Cardiac septum (tissue), 1 donor: ENCODE measurements at regions of chr15 and their contacts with region 1.

Region 1: DNA sequence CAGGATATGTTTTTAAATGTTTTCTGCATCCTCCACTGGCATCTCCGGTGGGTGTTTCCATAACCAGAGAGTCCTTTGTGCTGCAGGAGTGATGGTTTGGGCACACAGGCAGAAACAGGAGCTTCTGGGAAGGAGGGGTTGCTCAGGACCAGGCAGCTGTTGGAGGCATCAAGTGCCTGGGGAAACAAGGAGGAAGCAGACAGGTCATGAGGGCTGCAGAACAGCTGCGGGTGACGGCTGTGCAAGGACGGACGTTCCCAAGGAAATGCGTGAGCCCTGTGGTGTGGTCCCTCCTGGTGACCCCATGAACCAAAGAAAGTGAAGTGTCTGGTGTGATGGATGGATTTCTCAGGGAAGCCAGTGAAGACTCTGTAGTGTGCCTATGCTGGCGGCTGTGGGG is 61.2 kb upstream of the TNFAIP8L3 start:
- DNase-seq: no peak

Region 2: DNA sequence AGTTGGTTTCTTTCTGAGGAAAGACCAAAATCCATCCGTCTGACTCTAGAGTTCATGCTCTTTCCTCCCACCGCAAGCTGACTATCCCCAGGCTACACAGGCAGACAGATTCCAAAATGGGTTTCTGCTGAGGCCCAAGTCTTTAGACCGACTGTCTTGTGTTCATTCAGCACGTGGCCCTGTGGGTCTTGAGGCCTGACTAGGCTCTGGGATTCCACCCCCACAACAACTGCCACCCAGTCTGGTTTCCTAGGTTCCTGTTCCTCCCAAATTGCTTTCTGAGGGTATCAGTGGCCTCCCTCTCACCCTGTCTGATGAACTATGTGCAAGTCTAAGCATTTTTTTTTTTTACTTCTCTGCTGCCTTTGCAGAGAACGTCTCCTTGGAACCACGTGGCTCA is 114.8 kb after region 1 on chr15:
- intact Hi-C with region 1: loop called (anchors 10 kb)
- DNase-seq: no peak

Region 3: GRCh38 chr15:51286791-51287190 is 130.9 kb after region 1 on chr15:
- intact Hi-C with region 1: no loop called
- DNase-seq: no peak

Region 4: GRCh38 chr15:51450001-51450400 is 294.1 kb after region 1 on chr15:
- intact Hi-C with region 1: no loop called
- DNase-seq: no peak